Dorsolateral prefrontal cortex (tissue), 120 donors: ENCODE measurements at regions of chr1 and their contacts with region 1.

Region 1: DNA sequence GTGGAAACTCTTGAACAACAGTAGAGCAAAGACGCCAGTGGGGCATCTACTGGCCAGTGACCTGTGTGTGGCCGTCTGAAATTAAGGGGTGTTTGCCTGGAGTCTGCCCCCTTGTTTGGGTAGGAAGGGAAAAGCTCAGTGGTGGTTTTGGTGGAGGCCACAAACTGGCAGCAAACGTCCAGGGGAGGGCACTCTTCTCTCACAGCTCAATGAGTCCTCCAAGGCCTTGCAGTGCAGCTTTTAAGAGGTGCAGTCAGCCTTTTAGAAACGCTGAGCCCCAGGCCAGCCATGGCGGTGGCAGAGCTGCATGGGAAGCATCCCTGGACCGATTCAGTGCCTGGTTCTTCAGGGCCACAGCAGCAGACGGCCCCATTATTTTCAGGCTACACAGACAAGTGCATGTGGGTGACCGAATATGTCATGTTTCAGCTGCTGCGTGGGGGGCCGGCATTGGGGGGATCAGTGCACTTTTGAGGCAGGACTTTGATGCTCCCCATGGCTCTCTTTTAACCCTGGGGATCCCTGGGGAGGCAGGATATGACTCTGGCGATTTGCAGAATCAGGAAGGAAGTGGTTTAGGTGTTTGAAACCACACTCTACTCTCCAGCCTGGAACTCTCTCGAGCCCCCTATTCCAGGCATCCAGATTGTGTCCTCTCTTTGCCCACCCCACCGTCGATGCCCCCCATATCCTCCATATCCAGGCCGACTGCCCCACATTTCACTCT is 414.0 kb downstream of the PRDM2 start:
- DNase-seq: peak; percentile 57 to 86 (median 77)
- H3K4me3 ChIP-seq: no peak overlapping the region
- H3K27ac ChIP-seq: peak overlapping the region in 37 of 59 donors; percentile 0 to 81 (median 46)
- H3K27me3 ChIP-seq: no peaks in the 10 kb centered on the region
- CTCF ChIP-seq: peak in 55 of 56 donors; percentile 50 to 91 (median 77)

Region 2: DNA sequence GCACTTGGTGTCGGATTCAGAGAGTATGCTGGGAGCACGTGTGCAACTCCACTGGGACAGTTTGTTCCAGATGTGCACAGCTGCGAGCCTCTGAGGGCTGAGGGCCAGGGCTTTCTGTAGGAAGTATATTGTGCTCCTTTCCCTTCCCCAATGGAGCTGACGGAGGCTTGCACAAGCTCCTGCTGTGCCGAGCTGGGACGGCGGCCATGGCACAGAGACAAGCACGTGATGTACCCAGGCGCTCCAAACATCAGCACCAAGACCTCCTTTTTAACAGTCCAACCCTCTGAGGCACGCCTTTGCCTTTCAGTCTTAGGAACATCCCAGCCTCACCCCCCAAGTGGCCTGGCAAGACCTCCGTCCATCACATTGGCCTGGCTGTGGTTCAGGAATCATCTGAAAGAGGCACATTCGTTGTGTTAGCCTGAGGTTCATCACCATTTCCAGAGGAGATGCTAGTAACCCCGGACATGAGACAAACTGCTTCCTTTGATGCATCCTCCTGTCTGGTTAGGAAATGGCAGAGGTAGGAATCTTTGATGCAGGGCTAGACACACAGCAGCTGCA is 145.3 kb after region 1 on chr1:
- intact Hi-C with region 1: loop called (anchors 5 to 10 kb)
- DNase-seq: peak; percentile 69 to 97 (median 92)
- H3K4me3 ChIP-seq: peak overlapping the region in 9 of 59 donors; percentile 0 to 27 (median 10)
- H3K27ac ChIP-seq: peak overlapping the region; percentile 61 to 100 (median 96)
- H3K27me3 ChIP-seq: no peaks in the 10 kb centered on the region
- CTCF ChIP-seq: peak in 7 of 56 donors; percentile 3 to 35 (median 18)

Region 3: GRCh38 chr1:14404862-14405301 is 290.9 kb after region 1 on chr1:
- intact Hi-C with region 1: loop called in 1 of 2 experiments (anchors 10 kb)
- DNase-seq: no peak
- H3K4me3 ChIP-seq: no peak overlapping the region
- H3K27ac ChIP-seq: no peak overlapping the region
- H3K27me3 ChIP-seq: no peaks in the 10 kb centered on the region
- CTCF ChIP-seq: no peak

Region 4: GRCh38 chr1:14522926-14523241 is 408.9 kb after region 1 on chr1:
- intact Hi-C with region 1: loop called in 1 of 2 experiments (anchors 10 kb)
- DNase-seq: peak in 3 of 10 donors; percentile 14 to 58 (median 26)
- H3K4me3 ChIP-seq: no peak overlapping the region
- H3K27ac ChIP-seq: peak overlapping the region in 1 of 59 donors; percentile 36
- H3K27me3 ChIP-seq: no peaks in the 10 kb centered on the region
- CTCF ChIP-seq: no peak

Region 5: DNA sequence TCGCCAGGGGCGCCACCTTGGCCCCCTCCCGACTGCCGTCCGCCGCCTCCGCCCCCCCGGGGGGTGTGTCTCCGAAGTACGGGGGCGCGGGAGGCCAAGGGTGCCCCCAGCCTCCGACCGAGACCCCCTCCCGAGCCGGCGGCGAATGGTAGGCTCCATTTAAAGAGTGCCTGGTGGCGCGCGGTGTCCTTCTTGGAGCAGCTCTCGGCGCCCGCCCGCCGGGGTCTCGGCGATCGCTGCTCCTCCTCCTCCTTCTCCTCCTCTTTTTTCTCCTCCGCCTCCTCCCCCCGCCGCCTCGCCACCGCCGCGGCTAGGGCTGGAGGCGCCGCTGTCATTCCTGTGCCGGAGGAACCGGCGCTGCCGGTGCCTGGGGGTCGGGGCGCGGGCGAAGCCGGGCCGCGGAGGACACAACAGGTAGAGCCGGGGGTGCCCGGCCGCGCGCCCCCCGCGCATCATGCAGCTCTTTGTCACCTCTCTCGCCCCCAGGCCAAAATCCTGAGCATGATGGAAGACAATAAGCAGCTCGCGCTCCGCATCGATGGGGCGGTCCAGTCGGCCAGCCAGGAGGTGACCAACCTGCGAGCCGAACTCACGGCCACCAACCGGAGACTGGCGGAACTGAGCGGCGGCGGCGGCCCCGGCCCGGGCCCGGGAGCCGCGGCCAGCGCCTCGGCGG is 484.6 kb after region 1 on chr1 and contains the start of gene KAZN:
- intact Hi-C with region 1: loop called in 1 of 2 experiments (anchors 2 kb)
- DNase-seq: peak in 8 of 10 donors; percentile 31 to 76 (median 57)
- H3K4me3 ChIP-seq: peak within 1 kb of the TSS; percentile 52 to 85 (median 74)
- H3K27ac ChIP-seq: peak within 1 kb of the TSS in 45 of 59 donors; percentile 6 to 88 (median 61)
- H3K27me3 ChIP-seq: peaks cover 0 to 8% (median 0%) of the 10 kb centered on the region in 45 donors
- CTCF ChIP-seq: peak in 1 of 56 donors; percentile 13
- total RNA-seq, gene KAZN: 51.1 to 93.6 (median 76.3) TPM

Region 6: DNA sequence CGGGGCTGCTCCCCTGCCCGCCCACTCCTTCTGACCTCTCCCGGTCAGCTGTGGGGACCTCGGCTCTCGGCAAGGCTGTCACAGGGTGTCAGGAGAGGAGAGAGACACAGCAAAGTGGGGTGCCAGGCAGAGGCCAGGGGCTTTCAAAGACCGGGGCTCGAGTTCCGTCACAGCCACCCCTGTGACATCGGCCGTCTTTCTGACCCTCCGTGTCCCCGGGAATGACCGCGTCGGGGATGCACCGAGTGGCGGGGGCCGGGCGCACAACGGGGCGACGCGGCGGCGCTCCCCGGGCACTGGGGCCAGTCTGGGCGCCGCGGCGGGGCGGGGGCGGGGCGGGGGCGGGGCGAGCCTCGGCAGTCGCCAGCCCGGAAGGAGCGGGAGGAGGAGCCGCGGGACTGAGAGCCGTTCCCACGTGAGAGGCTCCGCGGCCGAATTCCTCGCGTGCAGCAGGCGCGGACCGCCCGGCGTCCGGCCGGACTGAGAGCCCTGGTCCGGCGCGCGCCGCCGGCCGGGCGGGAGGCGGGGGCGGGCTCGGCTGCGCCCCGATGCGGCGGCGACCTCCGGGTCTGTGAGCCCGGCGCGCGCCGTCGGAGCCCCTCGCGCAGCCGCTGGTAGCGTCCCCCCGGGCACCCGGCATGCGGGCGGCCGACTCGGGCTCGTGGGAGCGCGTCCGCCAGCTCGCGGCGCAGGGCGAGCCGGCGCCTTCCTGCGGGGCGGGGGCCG is 809.9 kb after region 1 on chr1:
- intact Hi-C with region 1: loop called in 1 of 2 experiments (anchors 10 kb)
- DNase-seq: peak in 9 of 10 donors; percentile 34 to 81 (median 69)
- H3K4me3 ChIP-seq: peak overlapping the region in 56 of 59 donors; percentile 13 to 89 (median 64)
- H3K27ac ChIP-seq: peak overlapping the region in 56 of 59 donors; percentile 47 to 90 (median 83)
- H3K27me3 ChIP-seq: no peaks in the 10 kb centered on the region
- CTCF ChIP-seq: peak in 1 of 56 donors; percentile 8

Region 7: DNA sequence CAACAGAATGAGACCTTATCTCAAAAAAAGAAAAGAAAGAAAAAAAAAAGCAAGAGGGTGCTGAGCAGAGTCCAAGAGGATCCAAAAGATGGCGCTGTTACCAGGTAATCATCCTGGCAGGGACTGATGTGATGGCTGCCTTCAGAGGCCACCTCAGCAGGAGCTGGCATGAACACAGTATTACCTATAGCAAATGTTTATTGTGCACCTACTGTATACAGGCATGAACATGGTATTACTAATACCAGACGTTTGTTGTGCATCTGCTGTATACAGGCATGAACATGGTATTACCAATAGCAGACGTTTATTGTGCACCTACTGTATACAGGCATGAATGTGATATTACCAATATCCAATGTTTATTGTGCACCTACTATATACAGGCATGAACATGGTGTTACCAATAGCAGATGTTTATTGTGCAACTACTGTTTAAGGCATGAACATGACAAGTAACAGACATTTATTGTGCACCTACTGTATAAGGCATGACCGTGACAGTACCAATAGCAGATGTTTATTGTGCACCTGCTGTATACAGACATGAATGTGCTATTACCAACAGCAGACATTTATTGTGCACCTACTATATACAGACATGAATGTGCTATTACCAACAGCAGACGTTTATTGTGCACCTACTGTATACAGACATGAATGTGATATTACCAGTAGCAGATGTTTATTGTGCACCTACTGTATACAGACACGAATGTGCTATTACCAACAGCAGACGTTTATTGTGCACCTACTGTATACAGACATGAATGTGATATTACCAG is 924.4 kb after region 1 on chr1:
- intact Hi-C with region 1: loop called in 1 of 2 experiments (anchors 10 kb)
- DNase-seq: no peak
- H3K4me3 ChIP-seq: no peak overlapping the region
- H3K27ac ChIP-seq: peak overlapping the region in 2 of 59 donors; percentile 5 to 6
- H3K27me3 ChIP-seq: no peaks in the 10 kb centered on the region
- CTCF ChIP-seq: no peak